ENCODE measurements at regions of chr12 and their contacts with region 1.

Region 1: DNA sequence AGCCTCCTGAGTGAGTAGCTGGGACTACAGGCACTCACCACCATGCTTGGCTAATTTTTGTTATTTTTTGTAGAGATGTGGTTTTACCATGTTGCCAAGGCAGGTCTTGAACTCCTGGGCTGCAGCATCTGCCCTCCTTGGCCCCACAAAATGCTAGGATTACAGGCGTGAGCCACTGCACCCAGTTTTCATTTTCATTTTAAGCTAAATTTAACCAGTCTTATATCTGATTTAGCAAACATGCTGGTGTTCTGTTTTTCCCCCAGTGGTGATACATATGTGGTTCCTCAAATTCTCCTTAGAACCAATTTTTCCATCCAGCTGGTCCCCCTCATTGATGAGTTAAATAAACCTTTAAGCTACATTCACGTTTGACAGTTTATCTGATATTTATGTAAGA is 43.8 kb upstream of the BICD1 start:
- DNase-seq: no peak
- H3K4me3 ChIP-seq: no peak overlapping the region
- H3K27ac ChIP-seq: no peak overlapping the region
- H3K4me1 ChIP-seq: no peaks in the 10 kb centered on the region
- H3K27me3 ChIP-seq: no peaks in the 10 kb centered on the region
- CTCF ChIP-seq: no peak

Region 2: DNA sequence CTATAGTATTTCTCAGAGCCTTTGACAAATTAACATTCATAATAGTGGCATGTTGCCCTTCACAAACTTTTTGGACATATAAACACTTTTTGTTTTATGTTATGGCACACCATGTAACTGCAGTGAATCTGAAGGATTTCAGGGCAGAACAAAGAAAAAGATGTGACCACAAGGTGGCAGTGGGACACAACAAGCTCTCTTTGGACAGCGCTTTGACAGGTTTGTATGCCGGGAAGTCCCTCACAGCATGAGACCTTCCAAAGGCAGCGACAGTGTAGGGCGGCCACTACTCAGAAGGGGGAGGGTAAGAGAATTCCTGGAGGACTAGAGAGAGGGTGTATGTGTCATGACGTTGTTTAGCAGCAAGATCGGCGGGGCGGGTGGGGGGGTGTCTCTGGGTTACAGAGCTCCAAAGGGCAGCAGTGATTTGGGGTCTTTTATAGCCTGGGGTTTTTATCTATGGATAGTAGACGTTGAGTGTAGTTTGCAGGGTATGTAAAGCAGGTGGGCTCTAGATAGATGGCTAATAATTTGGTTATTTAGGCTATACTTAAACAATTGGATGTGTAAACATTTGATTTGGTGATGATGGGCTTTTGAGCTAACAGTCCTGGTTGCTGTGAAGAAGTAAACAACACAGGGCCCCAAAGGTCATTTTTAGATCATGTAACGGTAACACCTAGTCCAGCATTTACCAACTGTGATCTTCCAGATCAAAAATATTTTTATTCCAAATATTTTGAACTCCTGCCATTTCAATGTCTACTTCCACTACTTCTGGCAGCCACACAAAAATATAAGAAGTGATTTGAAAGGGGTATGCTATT is 380.5 kb before region 1 on chr12:
- CTCF ChIA-PET with region 1: no interaction called
- dilution Hi-C with region 1: no loop called
- in situ Hi-C with region 1: no loop called
- intact Hi-C with region 1: loop called (anchors 2 kb)
- DNase-seq: peak; percentile 73
- H3K4me3 ChIP-seq: no peak overlapping the region
- H3K27ac ChIP-seq: no peak overlapping the region
- H3K4me1 ChIP-seq: no peaks in the 10 kb centered on the region
- H3K27me3 ChIP-seq: no peaks in the 10 kb centered on the region
- CTCF ChIP-seq: peak; percentile 75 to 80

Region 3: GRCh38 chr12:32024884-32025592 is 37.8 kb before region 1 on chr12:
- CTCF ChIA-PET with region 1: no interaction called
- dilution Hi-C with region 1: no loop called
- in situ Hi-C with region 1: no loop called
- intact Hi-C with region 1: no loop called
- DNase-seq: no peak
- H3K4me3 ChIP-seq: no peak overlapping the region
- H3K27ac ChIP-seq: no peak overlapping the region
- H3K4me1 ChIP-seq: no peaks in the 10 kb centered on the region
- H3K27me3 ChIP-seq: no peaks in the 10 kb centered on the region
- CTCF ChIP-seq: no peak

Region 4: DNA sequence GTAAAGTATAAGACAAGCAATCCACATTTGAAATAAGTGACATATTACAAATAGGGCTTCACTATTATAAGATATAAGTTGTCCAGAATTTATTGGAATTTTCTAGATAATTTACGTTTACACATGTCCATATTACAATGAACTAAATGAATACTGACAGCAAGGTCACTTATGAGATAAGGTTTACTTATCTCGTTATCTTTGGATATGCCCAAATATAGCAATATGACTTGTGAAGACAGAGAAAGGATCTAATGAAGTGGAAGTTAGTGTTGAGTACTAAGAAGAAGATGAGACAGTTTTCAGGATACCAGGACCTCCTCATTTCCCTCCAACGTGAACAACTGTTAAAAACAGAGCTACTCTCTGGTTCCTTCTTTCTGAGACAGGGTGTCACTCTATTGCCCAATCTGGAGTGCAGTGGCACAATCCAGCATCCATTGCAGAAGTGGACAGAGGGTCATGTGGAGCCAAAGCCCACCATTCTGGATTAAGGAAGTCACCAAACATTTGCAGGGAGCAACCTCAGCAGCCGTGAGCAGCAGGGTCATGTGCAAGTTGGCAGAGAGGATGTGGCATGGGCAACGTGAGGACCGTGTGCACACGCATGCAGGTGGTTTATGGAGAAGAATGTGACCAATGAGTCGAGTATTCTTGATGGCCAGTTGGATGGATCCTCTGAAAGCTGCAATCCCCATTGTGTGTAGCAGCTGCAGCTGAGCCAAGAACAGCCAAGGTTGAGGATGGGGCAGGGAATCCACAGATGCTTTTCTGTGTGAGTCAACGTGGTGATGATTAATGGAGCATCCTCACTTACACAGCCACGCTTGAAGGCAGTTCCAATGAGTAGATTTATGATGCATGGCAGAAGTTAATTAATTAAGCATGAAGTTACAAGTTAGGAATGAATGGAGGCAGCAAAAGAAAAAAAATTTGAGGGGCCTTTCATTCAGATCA is 154.8 kb after region 1 on chr12:
- CTCF ChIA-PET with region 1: no interaction called
- dilution Hi-C with region 1: no loop called
- in situ Hi-C with region 1: no loop called
- intact Hi-C with region 1: no loop called
- DNase-seq: peak; percentile 83
- H3K4me3 ChIP-seq: no peak overlapping the region
- H3K27ac ChIP-seq: no peak overlapping the region
- H3K4me1 ChIP-seq: peaks cover 13% of the 10 kb centered on the region
- H3K27me3 ChIP-seq: no peaks in the 10 kb centered on the region
- CTCF ChIP-seq: no peak

Region 5: DNA sequence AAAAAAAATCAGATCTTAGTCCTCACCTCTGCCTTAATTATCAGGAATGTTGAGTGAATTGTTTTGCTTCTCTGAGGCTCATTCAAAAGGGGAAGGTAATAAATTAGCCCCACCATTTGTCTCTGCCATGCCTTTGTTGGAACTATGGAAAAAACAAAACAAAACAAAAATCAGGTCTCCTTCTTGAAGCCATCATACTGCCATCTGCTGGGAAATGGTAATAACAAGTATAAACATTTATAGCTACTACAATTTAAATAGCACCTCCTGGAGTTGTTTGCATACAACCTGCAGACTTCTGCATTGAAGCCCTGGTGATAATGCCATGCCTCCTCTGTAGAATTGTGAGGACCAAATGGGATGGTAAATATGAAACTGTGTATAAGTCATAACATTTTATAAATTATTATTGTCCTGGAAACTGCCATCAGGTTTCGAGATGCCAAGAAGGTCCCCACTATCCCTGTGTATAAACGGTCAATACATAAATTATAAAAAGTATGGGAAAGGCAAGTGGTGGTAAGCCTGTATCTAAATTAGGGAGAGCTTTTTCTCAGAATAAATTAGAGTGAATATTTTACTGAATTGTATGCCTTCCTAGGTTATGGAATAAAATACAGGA is 249.3 kb after region 1 on chr12:
- CTCF ChIA-PET with region 1: interaction called, 6 read pairs
- dilution Hi-C with region 1: no loop called
- in situ Hi-C with region 1: loop called (anchors 10 to 25 kb)
- intact Hi-C with region 1: loop called (anchors 1 kb)
- DNase-seq: peak; percentile 45
- H3K4me3 ChIP-seq: no peak overlapping the region
- H3K27ac ChIP-seq: peak overlapping the region; percentile 8
- H3K4me1 ChIP-seq: no peaks in the 10 kb centered on the region
- H3K27me3 ChIP-seq: no peaks in the 10 kb centered on the region
- CTCF ChIP-seq: peak; percentile 29 to 55

Region 6: DNA sequence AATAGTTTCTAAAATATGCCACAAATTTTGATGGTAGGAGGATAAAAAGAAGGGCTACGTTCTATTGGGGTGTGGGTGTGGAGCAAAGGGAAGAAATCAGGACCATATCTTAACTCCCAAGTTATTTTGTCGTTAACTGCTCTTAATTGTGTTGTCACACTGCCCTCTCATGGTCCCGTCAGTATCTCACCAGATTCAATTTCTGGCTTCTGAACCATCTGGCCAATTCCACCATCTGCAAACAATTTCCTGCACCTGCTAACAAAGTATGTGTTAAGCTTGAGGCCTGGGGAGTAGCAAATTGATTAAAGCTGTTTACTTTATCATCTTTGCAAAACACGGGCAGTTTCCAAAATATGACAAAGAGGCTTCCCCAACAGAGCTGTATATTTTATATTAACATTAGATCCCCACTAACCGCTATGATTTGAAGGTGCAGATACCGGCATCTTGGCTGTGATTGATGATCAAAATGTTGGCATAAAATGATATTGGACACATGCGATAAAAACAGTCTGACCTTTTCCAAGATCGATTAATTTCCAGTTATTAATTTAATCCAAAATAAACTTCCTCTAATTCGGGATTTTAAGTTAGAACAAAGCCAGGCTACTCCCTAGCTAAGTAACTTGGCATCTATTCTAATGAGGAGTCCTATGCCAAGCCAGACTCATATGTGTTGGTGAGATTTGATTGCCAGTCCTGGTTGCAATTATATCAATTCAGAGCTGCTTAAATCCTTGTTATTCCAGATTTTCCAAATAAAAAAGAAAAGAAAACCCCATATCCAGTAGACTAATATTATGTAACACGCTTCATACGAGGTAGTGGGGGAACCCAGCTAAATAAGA is 609.3 kb after region 1 on chr12:
- CTCF ChIA-PET with region 1: no interaction called
- dilution Hi-C with region 1: no loop called
- in situ Hi-C with region 1: no loop called
- intact Hi-C with region 1: loop called (anchors 2 kb)
- DNase-seq: peak; percentile 37
- H3K4me3 ChIP-seq: no peak overlapping the region
- H3K27ac ChIP-seq: no peak overlapping the region
- H3K4me1 ChIP-seq: no peaks in the 10 kb centered on the region
- H3K27me3 ChIP-seq: no peaks in the 10 kb centered on the region
- CTCF ChIP-seq: peak; percentile 53 to 63